ENCODE measurements at regions of chr2 and their contacts with region 1.

Region 1: GRCh38 chr2:216206041-216206703 is 97.0 kb downstream of the XRCC5 start:
- DNase-seq: no peak
- H3K4me3 Mint-ChIP-seq: peak overlapping the region; percentile 9
- H3K27ac Mint-ChIP-seq: peak overlapping the region; percentile 92
- H3K4me1 Mint-ChIP-seq: peaks cover 63% of the 10 kb centered on the region
- H3K27me3 Mint-ChIP-seq: no peaks in the 10 kb centered on the region

Region 2: GRCh38 chr2:215961981-215962380 is 244.2 kb before region 1 on chr2:
- CTCF ChIA-PET with region 1: no interaction called
- POLR2A ChIA-PET with region 1: no interaction called
- intact Hi-C with region 1: no loop called
- DNase-seq: no peak
- H3K4me3 Mint-ChIP-seq: no peak overlapping the region
- H3K27ac Mint-ChIP-seq: no peak overlapping the region
- H3K4me1 Mint-ChIP-seq: no peaks in the 10 kb centered on the region
- H3K27me3 Mint-ChIP-seq: no peaks in the 10 kb centered on the region

Region 3: DNA sequence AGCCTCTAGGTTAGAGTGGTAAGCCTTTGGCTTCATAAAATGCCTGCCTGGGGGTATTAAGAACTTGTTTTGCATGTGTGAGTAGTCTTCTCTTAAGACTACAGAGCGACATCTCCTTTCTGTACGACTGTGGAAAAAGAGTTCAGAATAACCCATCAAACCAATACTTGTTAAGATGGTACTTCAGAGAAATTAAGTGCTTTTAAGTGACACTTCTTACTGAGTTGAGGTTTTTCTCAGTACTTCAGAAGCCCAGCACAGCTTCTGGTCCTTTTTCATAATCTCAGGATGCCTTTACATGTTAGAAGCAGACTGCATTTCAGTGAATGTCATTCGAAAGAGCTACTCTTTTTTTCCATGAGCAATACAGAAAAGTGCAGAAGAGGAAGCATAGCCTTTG is 86.2 kb before region 1 on chr2:
- CTCF ChIA-PET with region 1: no interaction called
- POLR2A ChIA-PET with region 1: no interaction called
- intact Hi-C with region 1: loop called (anchors 1 kb)
- DNase-seq: no peak
- H3K4me3 Mint-ChIP-seq: peak overlapping the region; percentile 9
- H3K27ac Mint-ChIP-seq: peak overlapping the region; percentile 91
- H3K4me1 Mint-ChIP-seq: peaks cover 81% of the 10 kb centered on the region
- H3K27me3 Mint-ChIP-seq: no peaks in the 10 kb centered on the region

Region 4: GRCh38 chr2:216195565-216196029 is 10.6 kb before region 1 on chr2:
- CTCF ChIA-PET with region 1: interaction called, 8 read pairs
- POLR2A ChIA-PET with region 1: interaction called, 7 read pairs
- intact Hi-C with region 1: loop called (anchors 1 kb)
- DNase-seq: peak; percentile 55
- H3K4me3 Mint-ChIP-seq: peak overlapping the region; percentile 31
- H3K27ac Mint-ChIP-seq: peak overlapping the region; percentile 91
- H3K4me1 Mint-ChIP-seq: peaks cover 66% of the 10 kb centered on the region
- H3K27me3 Mint-ChIP-seq: no peaks in the 10 kb centered on the region

Region 5: GRCh38 chr2:216348756-216349308 is 142.7 kb after region 1 on chr2:
- CTCF ChIA-PET with region 1: no interaction called
- POLR2A ChIA-PET with region 1: interaction called, 4 read pairs
- intact Hi-C with region 1: loop called (anchors 1 kb)
- DNase-seq: peak; percentile 52
- H3K4me3 Mint-ChIP-seq: no peak overlapping the region
- H3K27ac Mint-ChIP-seq: peak overlapping the region; percentile 36
- H3K4me1 Mint-ChIP-seq: peaks cover 66% of the 10 kb centered on the region
- H3K27me3 Mint-ChIP-seq: no peaks in the 10 kb centered on the region

Region 6: GRCh38 chr2:216498418-216499413 is 292.5 kb after region 1 on chr2 and contains the start of gene RPL37A:
- CTCF ChIA-PET with region 1: no interaction called
- POLR2A ChIA-PET with region 1: no interaction called
- intact Hi-C with region 1: loop called (anchors 5 kb)
- DNase-seq: peak; percentile 93
- H3K4me3 Mint-ChIP-seq: peak within 1 kb of the TSS; percentile 97
- H3K27ac Mint-ChIP-seq: peak within 1 kb of the TSS; percentile 99
- H3K4me1 Mint-ChIP-seq: peaks cover 45% of the 10 kb centered on the region
- H3K27me3 Mint-ChIP-seq: no peaks in the 10 kb centered on the region
- total RNA-seq, gene RPL37A: 4,165 to 4,237 TPM

Region 7: DNA sequence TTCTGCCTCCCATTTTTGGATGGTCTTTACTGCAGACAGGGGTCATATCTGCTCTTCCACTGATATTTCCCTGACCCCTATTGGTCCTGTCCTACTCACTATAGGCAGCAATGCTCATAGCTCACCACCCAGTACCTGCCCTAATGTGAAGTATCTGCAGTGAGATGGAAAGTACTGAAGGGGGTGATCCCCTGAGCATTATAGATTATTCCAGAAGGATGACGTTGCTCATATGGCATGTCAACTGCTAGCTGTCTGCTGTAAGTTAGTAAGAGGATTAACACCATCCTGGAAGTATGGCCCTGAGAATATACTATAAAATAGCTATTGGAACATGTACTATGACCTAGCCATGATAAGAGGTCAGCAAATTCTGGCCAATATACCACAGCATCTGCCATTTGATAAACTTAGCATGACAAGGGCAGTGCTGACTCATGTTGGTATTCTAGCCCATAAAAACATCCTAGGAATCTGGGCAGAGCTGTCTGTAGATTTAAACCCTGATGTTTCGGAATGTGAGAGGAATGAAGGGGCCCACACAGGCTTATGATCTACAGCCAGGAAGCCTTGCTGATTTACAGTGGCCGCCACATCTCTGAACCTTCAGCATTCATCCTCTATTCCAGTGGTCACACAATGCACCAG is 1345.2 kb after region 1 on chr2:
- CTCF ChIA-PET with region 1: no interaction called
- POLR2A ChIA-PET with region 1: no interaction called
- intact Hi-C with region 1: no loop called
- DNase-seq: no peak
- H3K4me3 Mint-ChIP-seq: no peak overlapping the region
- H3K27ac Mint-ChIP-seq: no peak overlapping the region
- H3K4me1 Mint-ChIP-seq: peaks cover 8% of the 10 kb centered on the region
- H3K27me3 Mint-ChIP-seq: no peaks in the 10 kb centered on the region

Measured in activated CD4-positive, alpha-beta memory T cell treated with anti-CD3 and anti-CD28 coated beads for 36 hours (primary cell).